ENCODE measurements at regions of chr3 and their contacts with region 1.

Region 1: GRCh38 chr3:66407611-66408218 is 93.1 kb downstream of the LRIG1 start:
- DNase-seq: peak; percentile 67 to 83
- ATAC-seq: peak; percentile 80 to 95 (median 92)
- H3K4me3 ChIP-seq: no peak overlapping the region
- H3K4me3 Mint-ChIP-seq: no peak overlapping the region
- H3K27ac ChIP-seq: no peak overlapping the region
- H3K27ac Mint-ChIP-seq: no peak overlapping the region
- H3K4me1 ChIP-seq: peaks cover 7% of the 10 kb centered on the region
- H3K4me1 Mint-ChIP-seq: no peaks in the 10 kb centered on the region
- H3K27me3 ChIP-seq: no peaks in the 10 kb centered on the region
- H3K27me3 Mint-ChIP-seq: no peaks in the 10 kb centered on the region
- CTCF ChIP-seq: peak; percentile 85

Region 2: DNA sequence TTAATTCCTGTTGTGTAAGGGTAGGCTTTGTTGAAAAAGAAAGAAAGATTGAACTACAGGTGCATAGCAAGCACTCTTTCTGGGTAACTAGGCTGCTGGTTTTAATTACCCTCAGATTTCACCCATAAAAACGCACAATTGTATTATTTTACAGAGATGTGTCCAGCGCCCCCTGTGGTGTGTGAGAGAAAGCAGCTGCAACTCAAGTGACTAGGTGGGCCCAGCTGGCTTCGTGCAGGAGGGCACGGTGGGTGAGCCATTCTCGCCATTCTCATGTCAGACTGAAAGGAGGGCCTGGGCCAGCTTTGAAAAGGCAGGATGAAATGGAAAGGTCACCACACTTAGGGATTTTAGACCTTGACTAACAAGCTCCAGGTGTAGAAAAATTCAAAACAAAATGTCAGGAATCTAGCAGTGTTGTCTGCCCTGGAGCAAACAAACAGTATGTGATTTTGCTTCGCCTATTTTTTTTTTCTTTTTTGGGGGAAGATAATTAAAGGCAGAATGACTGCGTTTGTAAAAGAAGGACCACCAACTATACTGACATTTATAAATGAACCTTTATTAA is 29.4 kb before region 1 on chr3:
- intact Hi-C with region 1: no loop called
- DNase-seq: peak in 1 of 2 donors; percentile 75
- ATAC-seq: peak; percentile 36 to 54 (median 52)
- H3K4me3 ChIP-seq: no peak overlapping the region
- H3K4me3 Mint-ChIP-seq: no peak overlapping the region
- H3K27ac ChIP-seq: no peak overlapping the region
- H3K27ac Mint-ChIP-seq: peak overlapping the region; percentile 34 to 51
- H3K4me1 ChIP-seq: no peaks in the 10 kb centered on the region
- H3K4me1 Mint-ChIP-seq: peaks cover 6% of the 10 kb centered on the region in 2 donors
- H3K27me3 ChIP-seq: no peaks in the 10 kb centered on the region
- H3K27me3 Mint-ChIP-seq: no peaks in the 10 kb centered on the region
- CTCF ChIP-seq: peak; percentile 59

Region 3: DNA sequence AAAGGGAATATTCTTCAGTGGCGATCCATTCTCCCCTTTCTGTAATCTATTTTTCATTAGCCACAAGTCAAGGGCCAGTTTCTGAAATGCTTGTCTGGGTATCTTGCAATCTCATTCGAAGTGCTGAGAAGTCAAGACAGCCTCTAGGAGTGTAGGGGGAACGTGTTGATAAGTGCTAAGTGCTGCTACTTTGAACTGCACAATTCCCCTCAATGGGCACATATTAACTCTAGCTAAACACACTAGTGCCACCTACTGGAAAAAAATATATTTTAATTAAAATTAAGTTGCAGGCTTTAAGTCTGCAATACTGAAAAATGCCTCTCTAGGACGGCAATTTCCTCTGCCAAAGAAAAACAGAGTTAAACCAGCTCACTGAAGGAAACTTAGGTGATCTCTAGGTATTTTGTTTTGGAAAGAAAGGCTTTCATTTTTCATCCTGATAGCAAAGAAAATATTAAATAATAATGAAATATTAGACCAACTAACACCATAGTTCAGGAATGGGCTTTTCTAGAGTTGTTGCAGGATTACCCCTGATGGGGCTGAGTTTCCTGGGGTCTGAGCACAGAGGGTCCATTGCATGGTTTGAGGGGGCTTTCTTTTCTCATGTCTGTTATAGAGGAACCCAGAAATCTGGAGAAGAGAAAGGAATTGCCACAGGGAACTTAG is 408.5 kb after region 1 on chr3:
- intact Hi-C with region 1: loop called (anchors 1 kb)
- DNase-seq: peak in 1 of 2 donors; percentile 68
- ATAC-seq: peak; percentile 72 to 77 (median 77)
- H3K4me3 ChIP-seq: no peak overlapping the region
- H3K4me3 Mint-ChIP-seq: no peak overlapping the region
- H3K27ac ChIP-seq: no peak overlapping the region
- H3K27ac Mint-ChIP-seq: no peak overlapping the region
- H3K4me1 ChIP-seq: no peaks in the 10 kb centered on the region
- H3K4me1 Mint-ChIP-seq: no peaks in the 10 kb centered on the region
- H3K27me3 ChIP-seq: peaks cover 3% of the 10 kb centered on the region
- H3K27me3 Mint-ChIP-seq: peaks cover 2 to 24% of the 10 kb centered on the region in 2 donors
- CTCF ChIP-seq: peak; percentile 69

Measured in natural killer cell (primary cell).